ENCODE measurements at regions of chr1 and their contacts with region 1.

Region 1: GRCh38 chr1:155050560-155051341 is at the start of gene ADAM15:
- DNase-seq: peak; percentile 93
- ATAC-seq: peak; percentile 56
- H3K4me3 ChIP-seq: peak within 1 kb of the TSS; percentile 95
- H3K27ac ChIP-seq: peak within 1 kb of the TSS; percentile 67
- H3K4me1 ChIP-seq: peaks cover 36% of the 10 kb centered on the region
- H3K27me3 ChIP-seq: no peaks in the 10 kb centered on the region
- CTCF ChIP-seq: peak; percentile 97
- total RNA-seq, gene ADAM15: 334 and 384 TPM in 2 replicates

Region 2: GRCh38 chr1:154906621-154907081 is 144.1 kb before region 1 on chr1:
- CTCF ChIA-PET with region 1: interaction called, 10 read pairs
- POLR2A ChIA-PET with region 1: no interaction called
- intact Hi-C with region 1: no loop called
- DNase-seq: peak; percentile 58
- ATAC-seq: peak; percentile 70
- H3K4me3 ChIP-seq: no peak overlapping the region
- H3K27ac ChIP-seq: no peak overlapping the region
- H3K4me1 ChIP-seq: no peaks in the 10 kb centered on the region
- H3K27me3 ChIP-seq: no peaks in the 10 kb centered on the region
- CTCF ChIP-seq: peak; percentile 74

Region 3: GRCh38 chr1:154951901-154952662 is 98.7 kb before region 1 on chr1:
- CTCF ChIA-PET with region 1: no interaction called
- POLR2A ChIA-PET with region 1: no interaction called
- intact Hi-C with region 1: no loop called
- DNase-seq: no peak
- ATAC-seq: no peak
- H3K4me3 ChIP-seq: no peak overlapping the region
- H3K27ac ChIP-seq: no peak overlapping the region
- H3K4me1 ChIP-seq: peaks cover 13% of the 10 kb centered on the region
- H3K27me3 ChIP-seq: no peaks in the 10 kb centered on the region
- CTCF ChIP-seq: no peak

Region 4: GRCh38 chr1:155017041-155017945 is 33.5 kb before region 1 on chr1:
- CTCF ChIA-PET with region 1: interaction called, 7 read pairs
- POLR2A ChIA-PET with region 1: interaction called, 3 read pairs
- intact Hi-C with region 1: loop called (anchors 5 kb)
- DNase-seq: peak; percentile 99
- ATAC-seq: peak; percentile 89
- H3K4me3 ChIP-seq: peak overlapping the region; percentile 42
- H3K27ac ChIP-seq: peak overlapping the region; percentile 87
- H3K4me1 ChIP-seq: peaks cover 21% of the 10 kb centered on the region
- H3K27me3 ChIP-seq: no peaks in the 10 kb centered on the region
- CTCF ChIP-seq: peak; percentile 100

Region 5: GRCh38 chr1:155070721-155071569 is 20.2 kb after region 1 on chr1:
- CTCF ChIA-PET with region 1: interaction called, 8 read pairs
- POLR2A ChIA-PET with region 1: interaction called, 15 read pairs
- intact Hi-C with region 1: no loop called
- DNase-seq: peak; percentile 93
- ATAC-seq: peak; percentile 94
- H3K4me3 ChIP-seq: peak overlapping the region; percentile 56
- H3K27ac ChIP-seq: no peak overlapping the region
- H3K4me1 ChIP-seq: peaks cover 11% of the 10 kb centered on the region; the same call in 1 of the 2 replicates
- H3K27me3 ChIP-seq: no peaks in the 10 kb centered on the region
- CTCF ChIP-seq: peak; percentile 55

Region 6: DNA sequence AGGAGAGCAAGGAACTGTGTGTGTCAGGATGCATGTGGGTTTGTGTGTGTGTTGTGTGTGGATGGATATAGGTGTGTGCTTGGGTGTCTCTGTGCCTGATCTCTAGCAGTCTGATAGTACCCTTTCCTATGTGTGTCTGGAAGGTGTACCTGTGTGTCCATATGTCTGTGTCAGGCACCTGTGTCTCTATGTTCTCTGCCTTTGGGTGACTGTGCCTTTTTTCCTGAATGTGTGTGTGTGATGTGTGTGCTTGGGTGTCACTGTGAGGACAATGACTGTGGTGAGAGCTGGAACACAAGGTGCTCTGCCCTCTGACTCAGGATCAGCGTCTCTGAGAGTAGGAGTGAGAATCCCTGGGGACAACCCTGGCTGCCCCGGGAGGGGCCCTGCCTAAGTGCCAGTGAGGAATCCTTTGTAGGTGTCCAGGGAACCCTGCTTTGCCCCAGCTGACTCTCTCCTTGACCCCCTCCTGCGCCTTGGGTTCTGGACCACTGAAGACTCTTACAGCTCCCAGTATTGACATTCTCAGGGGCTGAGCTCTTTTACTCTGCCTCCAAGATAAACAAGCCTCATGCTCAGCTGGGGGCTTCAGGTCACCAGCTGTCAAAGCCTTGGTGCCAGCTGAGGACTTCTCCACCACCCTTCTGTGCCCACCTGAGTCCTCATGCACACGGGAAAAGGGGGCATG is 27.2 kb after region 1 on chr1:
- CTCF ChIA-PET with region 1: no interaction called
- POLR2A ChIA-PET with region 1: interaction called, 15 read pairs
- intact Hi-C with region 1: no loop called
- DNase-seq: no peak
- ATAC-seq: no peak; the same call in 1 of the 2 replicates
- H3K4me3 ChIP-seq: peak overlapping the region; percentile 71
- H3K27ac ChIP-seq: no peak overlapping the region
- H3K4me1 ChIP-seq: peaks cover 50% of the 10 kb centered on the region
- H3K27me3 ChIP-seq: peaks cover 41% of the 10 kb centered on the region
- CTCF ChIP-seq: no peak

Region 7: GRCh38 chr1:155741908-155742307 is 691.2 kb after region 1 on chr1:
- CTCF ChIA-PET with region 1: no interaction called
- POLR2A ChIA-PET with region 1: no interaction called
- intact Hi-C with region 1: no loop called
- DNase-seq: no peak
- ATAC-seq: no peak
- H3K4me3 ChIP-seq: no peak overlapping the region
- H3K27ac ChIP-seq: no peak overlapping the region
- H3K4me1 ChIP-seq: 0 out of 2 replicates have a peak, but pooled peaks cover 4% of the 10 kb centered on the region
- H3K27me3 ChIP-seq: no peaks in the 10 kb centered on the region
- CTCF ChIP-seq: no peak